A673 (cell line): ENCODE measurements at regions of chr12 and their contacts with region 1.

Region 1: GRCh38 chr12:90102957-90103652 is 394.5 kb upstream of the ATP2B1 start:
- DNase-seq: peak; percentile 56
- H3K4me3 ChIP-seq: no peak overlapping the region
- H3K27ac ChIP-seq: no peak overlapping the region
- H3K4me1 ChIP-seq: peaks cover 59% of the 10 kb centered on the region
- H3K27me3 ChIP-seq: no peaks in the 10 kb centered on the region
- CTCF ChIP-seq: peak; percentile 78

Region 2: DNA sequence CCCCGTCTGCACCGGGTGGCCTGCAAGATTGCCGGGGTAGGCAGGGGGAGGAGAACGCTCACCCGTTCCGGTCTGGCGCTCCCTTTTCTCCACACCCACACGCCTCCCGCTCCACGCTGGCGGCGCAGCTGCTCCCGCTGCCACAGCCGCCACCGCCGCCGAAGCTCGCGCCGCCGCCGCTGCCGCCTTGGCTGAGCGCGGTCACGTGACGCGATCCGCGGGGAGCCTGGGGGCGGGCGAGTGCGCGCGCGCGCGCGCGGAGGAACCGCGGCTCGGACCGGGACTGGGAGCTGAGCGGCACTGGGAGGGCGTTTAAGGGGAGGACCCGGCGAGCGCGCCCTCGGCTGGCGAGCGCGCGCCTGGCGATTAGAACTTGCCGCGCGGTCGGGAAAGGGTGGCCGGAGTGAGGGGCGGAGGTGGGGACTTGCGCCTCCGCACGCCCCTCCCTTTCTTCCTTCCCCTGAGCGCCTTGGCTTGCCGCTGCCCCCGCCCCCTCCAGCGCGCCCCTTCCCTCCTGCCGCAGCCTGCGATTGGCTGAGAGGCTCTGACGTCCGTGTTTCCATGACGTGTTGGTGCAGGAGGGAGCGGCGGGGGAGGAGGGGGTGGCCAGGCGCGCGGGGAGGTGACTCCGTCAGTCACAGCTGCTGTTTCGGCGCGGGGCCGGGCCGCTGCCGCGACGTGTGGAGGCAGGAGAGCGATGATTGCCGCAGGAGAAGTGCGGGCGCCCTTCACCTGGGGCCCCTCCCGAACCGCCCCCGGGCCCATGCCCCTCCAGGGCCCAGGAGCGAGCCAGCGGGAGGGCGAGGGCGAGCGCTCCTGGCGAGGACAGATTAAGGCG is 393.7 kb before region 1 on chr12:
- CTCF ChIA-PET with region 1: interaction called, 9 read pairs
- POLR2A ChIA-PET with region 1: no interaction called
- intact Hi-C with region 1: loop called (anchors 5 kb)
- DNase-seq: peak; percentile 99
- H3K4me3 ChIP-seq: peak overlapping the region; percentile 89
- H3K27ac ChIP-seq: peak overlapping the region; percentile 96
- H3K4me1 ChIP-seq: peaks cover 17% of the 10 kb centered on the region
- H3K27me3 ChIP-seq: no peaks in the 10 kb centered on the region
- CTCF ChIP-seq: no peak

Region 3: GRCh38 chr12:90013409-90013808 is 89.7 kb before region 1 on chr12:
- CTCF ChIA-PET with region 1: no interaction called
- POLR2A ChIA-PET with region 1: no interaction called
- intact Hi-C with region 1: loop called (anchors 1 kb)
- DNase-seq: no peak
- H3K4me3 ChIP-seq: no peak overlapping the region
- H3K27ac ChIP-seq: no peak overlapping the region
- H3K4me1 ChIP-seq: peaks cover 10% of the 10 kb centered on the region
- H3K27me3 ChIP-seq: no peaks in the 10 kb centered on the region
- CTCF ChIP-seq: 0 out of 2 replicates have a peak, but pooled peaks have one; percentile 36

Region 4: DNA sequence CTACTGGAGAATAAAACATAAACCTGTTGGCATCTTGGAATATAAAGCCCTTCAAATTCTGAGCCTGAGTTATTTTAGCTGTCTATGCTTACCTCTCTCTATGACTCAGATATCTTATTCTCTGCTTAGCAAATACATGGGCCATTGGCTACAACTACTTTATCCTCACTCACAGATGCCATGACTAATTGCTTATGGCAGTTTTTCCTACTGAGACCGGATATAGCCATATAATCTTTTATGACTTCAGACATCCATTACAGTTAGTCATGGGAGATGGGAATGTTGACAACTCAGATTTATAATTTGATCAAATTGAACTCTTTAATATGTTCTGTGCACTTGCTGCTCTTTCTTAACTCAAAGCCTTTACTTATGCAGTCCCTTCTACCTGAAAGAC is 107.9 kb after region 1 on chr12:
- CTCF ChIA-PET with region 1: no interaction called
- POLR2A ChIA-PET with region 1: no interaction called
- intact Hi-C with region 1: loop called (anchors 5 kb)
- DNase-seq: peak; percentile 97
- H3K4me3 ChIP-seq: no peak overlapping the region
- H3K27ac ChIP-seq: peak overlapping the region; percentile 51
- H3K4me1 ChIP-seq: peaks cover 20% of the 10 kb centered on the region
- H3K27me3 ChIP-seq: no peaks in the 10 kb centered on the region
- CTCF ChIP-seq: no peak

Region 5: DNA sequence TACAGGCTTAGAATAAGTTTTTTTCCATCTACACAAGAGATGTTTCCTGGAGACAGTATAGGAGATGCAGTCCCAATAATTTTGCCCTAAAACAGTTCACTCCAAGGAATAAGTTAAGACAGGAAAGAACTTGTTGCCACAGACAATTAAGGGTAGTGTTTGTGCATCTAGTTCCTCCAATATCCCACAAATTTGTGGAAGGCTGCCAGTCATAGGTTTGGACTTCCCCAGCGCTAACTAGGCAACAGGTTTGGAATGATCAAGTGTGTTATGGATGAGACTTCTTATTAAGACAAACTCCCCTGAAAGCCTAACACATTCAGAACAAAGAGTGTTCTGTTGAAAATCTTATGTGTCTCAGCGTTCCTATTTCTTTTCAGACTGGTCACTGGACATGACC is 240.9 kb after region 1 on chr12:
- CTCF ChIA-PET with region 1: no interaction called
- POLR2A ChIA-PET with region 1: no interaction called
- intact Hi-C with region 1: no loop called
- DNase-seq: no peak
- H3K4me3 ChIP-seq: no peak overlapping the region
- H3K27ac ChIP-seq: no peak overlapping the region
- H3K4me1 ChIP-seq: no peaks in the 10 kb centered on the region
- H3K27me3 ChIP-seq: no peaks in the 10 kb centered on the region
- CTCF ChIP-seq: no peak

Region 6: GRCh38 chr12:90484094-90484493 is 381.0 kb after region 1 on chr12:
- CTCF ChIA-PET with region 1: no interaction called
- POLR2A ChIA-PET with region 1: no interaction called
- intact Hi-C with region 1: no loop called
- DNase-seq: no peak
- H3K4me3 ChIP-seq: no peak overlapping the region
- H3K27ac ChIP-seq: no peak overlapping the region
- H3K4me1 ChIP-seq: peaks cover 11% of the 10 kb centered on the region
- H3K27me3 ChIP-seq: no peaks in the 10 kb centered on the region
- CTCF ChIP-seq: no peak